BJ (cell line): ENCODE measurements at regions of chr5 and their contacts with region 1.

Region 1: GRCh38 chr5:43120720-43121564 is at the start of gene ZNF131:
- DNase-seq: peak; percentile 79
- H3K4me3 ChIP-seq: peak within 1 kb of the TSS; percentile 81
- H3K27me3 ChIP-seq: no peaks in the 10 kb centered on the region
- CTCF ChIP-seq: no peak
- polyA plus RNA-seq, gene ZNF131: 23.3 and 33.3 TPM in 2 replicates

Region 2: DNA sequence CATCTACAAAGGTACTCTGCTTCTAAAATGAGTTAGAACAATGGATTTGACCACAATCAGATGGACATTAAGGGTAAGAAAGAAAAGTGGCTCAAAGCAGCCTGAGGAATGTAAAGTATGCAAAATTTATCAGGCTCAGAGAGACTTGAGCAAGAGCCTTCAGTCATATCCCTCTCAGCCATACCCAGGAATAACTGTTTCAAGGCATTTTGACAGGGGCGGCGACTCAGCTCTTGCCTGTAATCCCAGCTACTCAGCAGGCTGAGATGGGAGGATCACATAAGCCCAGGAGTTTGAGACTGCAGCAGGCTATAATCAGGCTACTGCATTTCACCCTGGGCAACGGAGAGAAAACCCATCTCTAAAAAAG is 42.0 kb before region 1 on chr5:
- CTCF ChIA-PET with region 1: no interaction called
- POLR2A ChIA-PET with region 1: interaction called, 14 read pairs
- DNase-seq: peak; percentile 51
- H3K4me3 ChIP-seq: no peak overlapping the region
- H3K27me3 ChIP-seq: no peaks in the 10 kb centered on the region
- CTCF ChIP-seq: no peak

Region 3: DNA sequence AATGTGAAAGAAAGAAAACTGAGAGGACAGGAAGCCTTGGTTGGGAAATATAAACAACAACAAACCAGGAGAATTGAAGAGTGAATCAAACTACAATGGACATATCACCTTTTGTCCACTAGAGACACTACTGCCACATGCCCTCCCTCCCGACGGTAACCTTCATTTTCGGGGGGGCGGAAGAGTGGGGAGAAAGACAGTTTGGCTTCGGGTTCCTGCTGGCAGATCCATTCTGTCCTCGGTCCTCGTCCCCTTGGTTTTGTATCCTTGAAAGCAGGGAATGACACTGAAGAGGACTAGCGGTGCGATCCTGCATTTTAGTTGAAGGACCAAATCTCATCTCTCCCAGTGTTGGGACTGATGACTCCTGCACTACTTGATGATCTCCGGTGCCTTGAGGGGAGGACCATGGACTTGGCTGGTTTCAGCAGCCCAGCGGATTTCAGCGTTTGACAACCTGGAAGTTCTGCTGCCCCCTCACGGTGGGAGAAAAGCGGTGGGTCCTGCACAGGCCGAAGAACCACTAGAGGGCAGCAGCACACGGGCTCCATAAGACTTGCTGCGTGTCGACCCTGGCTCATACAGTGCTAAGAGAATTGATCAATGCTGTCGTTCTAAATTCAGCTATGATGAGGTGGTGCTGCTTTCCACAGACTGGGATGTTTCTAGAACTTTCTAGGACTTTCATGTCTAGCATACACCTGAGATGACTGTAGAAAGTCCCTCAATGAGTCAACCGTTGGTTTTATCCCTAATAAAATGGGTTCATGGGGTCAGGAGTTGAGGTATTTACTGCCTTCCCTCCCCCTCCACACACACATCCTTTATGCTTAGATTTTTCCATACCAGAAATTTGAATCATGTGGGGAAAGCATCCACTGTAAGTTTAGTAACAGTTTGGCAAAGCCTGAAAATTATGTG is 15.3 kb before region 1 on chr5:
- CTCF ChIA-PET with region 1: interaction called, 22 read pairs
- POLR2A ChIA-PET with region 1: no interaction called
- DNase-seq: peak; percentile 83
- H3K4me3 ChIP-seq: peak overlapping the region; percentile 25
- H3K27me3 ChIP-seq: no peaks in the 10 kb centered on the region
- CTCF ChIP-seq: peak; percentile 100

Region 4: GRCh38 chr5:43313035-43313853 is 192.3 kb after region 1 on chr5 and contains the start of gene HMGCS1:
- CTCF ChIA-PET with region 1: no interaction called
- POLR2A ChIA-PET with region 1: interaction called, 17 read pairs
- DNase-seq: peak; percentile 98
- H3K4me3 ChIP-seq: peak within 1 kb of the TSS; percentile 79
- H3K27me3 ChIP-seq: 0 out of 2 replicates have a peak, but pooled peaks cover 2% of the 10 kb centered on the region
- CTCF ChIP-seq: peak; percentile 19; the same call in 1 of the 2 replicates
- polyA plus RNA-seq, gene HMGCS1: 8.6 and 11.3 TPM in 2 replicates